Panc1 (cell line): ENCODE measurements at regions of chr7 and their contacts with region 1.

Region 1: GRCh38 chr7:2993868-2994267 is 49.8 kb downstream of the CARD11 start:
- DNase-seq: no peak
- ATAC-seq: no peak
- H3K4me3 ChIP-seq: no peak overlapping the region
- H3K27ac ChIP-seq: no peak overlapping the region
- H3K4me1 ChIP-seq: no peaks in the 10 kb centered on the region
- H3K27me3 ChIP-seq: peaks cover 5% of the 10 kb centered on the region; the same call in 1 of the 2 replicates
- CTCF ChIP-seq: no peak

Region 2: GRCh38 chr7:2920955-2921652 is 72.8 kb before region 1 on chr7:
- CTCF ChIA-PET with region 1: no interaction called
- POLR2A ChIA-PET with region 1: interaction called, 10 read pairs
- in situ Hi-C with region 1: no loop called
- intact Hi-C with region 1: no loop called
- DNase-seq: no peak
- ATAC-seq: peak; percentile 48; the same call in 1 of the 2 replicates
- H3K4me3 ChIP-seq: no peak overlapping the region
- H3K27ac ChIP-seq: no peak overlapping the region
- H3K4me1 ChIP-seq: peaks cover 10% of the 10 kb centered on the region
- H3K27me3 ChIP-seq: peaks cover 7% of the 10 kb centered on the region; the same call in 1 of the 2 replicates
- CTCF ChIP-seq: no peak

Region 3: GRCh38 chr7:3164380-3164792 is 170.5 kb after region 1 on chr7:
- CTCF ChIA-PET with region 1: interaction called, 11 read pairs
- POLR2A ChIA-PET with region 1: no interaction called
- in situ Hi-C with region 1: no loop called
- intact Hi-C with region 1: no loop called
- DNase-seq: no peak
- ATAC-seq: no peak
- H3K4me3 ChIP-seq: no peak overlapping the region
- H3K27ac ChIP-seq: no peak overlapping the region
- H3K4me1 ChIP-seq: no peaks in the 10 kb centered on the region; the same call in 1 of the 2 replicates
- H3K27me3 ChIP-seq: no peaks in the 10 kb centered on the region
- CTCF ChIP-seq: no peak